OCI-LY7 (cell line): ENCODE measurements at regions of chr12 and their contacts with region 1.

Region 1: DNA sequence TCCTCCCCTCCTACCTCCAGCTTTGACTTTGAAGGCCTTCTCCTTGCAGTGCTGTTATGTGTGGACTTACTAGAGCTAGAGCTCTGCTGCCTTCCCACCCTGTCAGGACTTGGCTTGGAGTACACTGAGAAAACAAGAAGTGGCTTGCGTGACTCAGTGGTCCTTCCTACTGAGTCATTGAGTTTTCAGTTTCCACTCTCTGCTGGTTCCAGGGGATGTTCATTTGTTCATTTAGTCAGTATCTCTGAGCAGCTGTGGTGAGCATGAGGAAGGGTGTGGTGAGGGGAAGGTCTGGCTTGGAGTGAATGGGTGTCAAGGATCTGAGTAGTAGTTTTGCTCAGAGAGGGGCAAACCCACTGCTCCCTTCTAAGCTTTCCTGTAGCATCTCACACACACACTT is 17.2 kb upstream of the ELK3 start:
- DNase-seq: no peak
- H3K4me3 ChIP-seq: no peak overlapping the region
- H3K27ac ChIP-seq: no peak overlapping the region
- H3K4me1 ChIP-seq: no peaks in the 10 kb centered on the region
- CTCF ChIP-seq: no peak

Region 2: GRCh38 chr12:96189781-96190180 is 12.8 kb after region 1 on chr12:
- CTCF ChIA-PET with region 1: no interaction called
- POLR2A ChIA-PET with region 1: interaction called, 10 read pairs
- intact Hi-C with region 1: no loop called
- DNase-seq: no peak
- H3K4me3 ChIP-seq: no peak overlapping the region
- H3K27ac ChIP-seq: no peak overlapping the region
- H3K4me1 ChIP-seq: peaks cover 23% of the 10 kb centered on the region
- CTCF ChIP-seq: no peak

Region 3: GRCh38 chr12:96204381-96204780 is 27.4 kb after region 1 on chr12:
- CTCF ChIA-PET with region 1: no interaction called
- POLR2A ChIA-PET with region 1: no interaction called
- intact Hi-C with region 1: no loop called
- DNase-seq: no peak
- H3K4me3 ChIP-seq: no peak overlapping the region
- H3K27ac ChIP-seq: no peak overlapping the region
- H3K4me1 ChIP-seq: peaks cover 31% of the 10 kb centered on the region
- CTCF ChIP-seq: no peak

Region 4: GRCh38 chr12:96359328-96359727 is 182.3 kb after region 1 on chr12:
- CTCF ChIA-PET with region 1: no interaction called
- POLR2A ChIA-PET with region 1: no interaction called
- intact Hi-C with region 1: no loop called
- DNase-seq: no peak
- H3K4me3 ChIP-seq: no peak overlapping the region
- H3K27ac ChIP-seq: no peak overlapping the region
- H3K4me1 ChIP-seq: peaks cover 8% of the 10 kb centered on the region
- CTCF ChIP-seq: no peak

Region 5: DNA sequence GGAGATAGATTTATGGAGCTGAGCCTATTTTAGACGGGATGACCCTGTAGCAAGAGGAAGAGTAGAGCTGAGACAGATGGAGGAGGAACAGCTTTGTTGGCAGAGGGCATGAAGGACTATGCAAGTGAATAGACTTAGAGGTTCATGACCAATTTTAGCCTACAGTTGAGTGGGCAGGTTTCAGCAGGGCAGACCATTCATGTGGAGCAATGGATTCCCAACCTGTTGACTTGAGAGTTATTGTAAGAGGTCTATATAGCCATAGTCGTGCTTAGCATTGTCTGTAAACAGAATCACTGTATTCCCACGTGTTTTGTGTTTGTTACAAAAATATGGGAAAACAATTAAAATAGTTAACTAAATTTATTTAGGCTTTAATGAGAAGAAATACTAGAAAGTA is 429.1 kb after region 1 on chr12:
- CTCF ChIA-PET with region 1: no interaction called
- POLR2A ChIA-PET with region 1: no interaction called
- intact Hi-C with region 1: no loop called
- DNase-seq: no peak
- H3K4me3 ChIP-seq: no peak overlapping the region
- H3K27ac ChIP-seq: no peak overlapping the region
- H3K4me1 ChIP-seq: no peaks in the 10 kb centered on the region
- CTCF ChIP-seq: no peak